ENCODE measurements at regions of chr5 and their contacts with region 1.

Region 1: GRCh38 chr5:172764849-172765765 is 5.9 kb downstream of the DUSP1 start:
- DNase-seq: peak; percentile 86 to 99 (median 98)
- ATAC-seq: peak; percentile 71 to 95 (median 94)
- H3K4me3 ChIP-seq: peak overlapping the region; percentile 52 to 68
- H3K4me3 Mint-ChIP-seq: peak overlapping the region; percentile 77 to 93 (median 81)
- H3K27ac ChIP-seq: peak overlapping the region; percentile 98
- H3K27ac Mint-ChIP-seq: peak overlapping the region; percentile 97
- H3K4me1 ChIP-seq: peaks cover 11 to 55% of the 10 kb centered on the region in 2 experiments
- H3K4me1 Mint-ChIP-seq: peaks cover 54 to 61% (median 59%) of the 10 kb centered on the region in 3 donors
- H3K27me3 ChIP-seq: no peaks in the 10 kb centered on the region
- H3K27me3 Mint-ChIP-seq: no peaks in the 10 kb centered on the region

Region 2: DNA sequence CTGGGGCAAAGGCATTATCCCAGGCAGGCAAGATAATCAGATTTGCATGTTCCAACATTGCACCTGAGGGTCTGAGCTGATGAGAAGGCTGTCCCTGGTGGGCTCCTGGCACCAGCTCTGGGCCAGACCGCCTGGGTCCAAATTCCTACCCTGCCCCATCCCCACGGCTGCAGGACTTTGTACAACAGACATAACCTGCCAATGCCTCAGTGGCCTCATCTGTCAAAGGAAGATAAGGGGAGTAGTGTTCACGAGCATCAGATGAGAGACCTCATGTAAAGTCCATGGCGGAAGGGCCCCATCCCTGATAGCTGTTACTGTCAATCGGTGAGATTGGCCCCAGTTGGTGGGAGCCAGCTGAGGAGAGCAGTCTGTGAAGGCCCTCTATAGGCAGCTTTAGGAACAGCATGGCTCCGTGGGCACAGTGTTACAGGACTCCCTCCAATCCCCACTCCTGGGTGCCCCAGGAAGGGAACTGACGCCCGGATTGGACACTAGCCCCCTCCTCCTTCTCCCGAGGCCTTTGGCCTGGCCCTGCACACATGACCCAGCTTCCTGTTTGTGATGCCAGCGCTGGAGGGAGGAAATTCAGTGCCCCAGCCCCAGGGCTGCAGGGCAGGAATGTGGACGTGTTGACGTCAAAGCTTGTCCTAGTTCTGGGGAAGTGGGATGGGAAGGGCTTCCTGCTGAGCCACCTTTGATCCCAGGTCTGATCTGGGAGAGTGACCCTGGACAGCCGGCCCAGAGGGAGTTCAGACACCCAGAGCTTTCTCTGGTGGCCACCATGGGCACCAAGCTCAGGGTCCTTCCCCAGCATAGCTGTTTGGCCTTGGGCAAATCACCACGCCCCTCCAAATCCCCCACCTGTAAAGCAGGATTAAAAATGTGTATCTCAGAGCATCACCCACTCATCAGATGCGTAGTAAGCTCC is 50.4 kb before region 1 on chr5:
- CTCF ChIA-PET with region 1: interaction called, 10 to 21 read pairs
- POLR2A ChIA-PET with region 1: interaction called, 3 read pairs
- DNase-seq: peak; percentile 28 to 81 (median 59)
- ATAC-seq: peak; percentile 65 to 81 (median 72)
- H3K4me3 ChIP-seq: no peak overlapping the region
- H3K4me3 Mint-ChIP-seq: no peak overlapping the region
- H3K27ac ChIP-seq: no peak overlapping the region
- H3K27ac Mint-ChIP-seq: no peak overlapping the region
- H3K4me1 ChIP-seq: peaks cover 0 to 27% of the 10 kb centered on the region in 2 experiments
- H3K4me1 Mint-ChIP-seq: peaks cover 8 to 10% (median 9%) of the 10 kb centered on the region in 3 donors
- H3K27me3 ChIP-seq: peaks cover 0 to 44% of the 10 kb centered on the region in 2 experiments
- H3K27me3 Mint-ChIP-seq: peaks cover 10% of the 10 kb centered on the region in 2 donors

Region 3: DNA sequence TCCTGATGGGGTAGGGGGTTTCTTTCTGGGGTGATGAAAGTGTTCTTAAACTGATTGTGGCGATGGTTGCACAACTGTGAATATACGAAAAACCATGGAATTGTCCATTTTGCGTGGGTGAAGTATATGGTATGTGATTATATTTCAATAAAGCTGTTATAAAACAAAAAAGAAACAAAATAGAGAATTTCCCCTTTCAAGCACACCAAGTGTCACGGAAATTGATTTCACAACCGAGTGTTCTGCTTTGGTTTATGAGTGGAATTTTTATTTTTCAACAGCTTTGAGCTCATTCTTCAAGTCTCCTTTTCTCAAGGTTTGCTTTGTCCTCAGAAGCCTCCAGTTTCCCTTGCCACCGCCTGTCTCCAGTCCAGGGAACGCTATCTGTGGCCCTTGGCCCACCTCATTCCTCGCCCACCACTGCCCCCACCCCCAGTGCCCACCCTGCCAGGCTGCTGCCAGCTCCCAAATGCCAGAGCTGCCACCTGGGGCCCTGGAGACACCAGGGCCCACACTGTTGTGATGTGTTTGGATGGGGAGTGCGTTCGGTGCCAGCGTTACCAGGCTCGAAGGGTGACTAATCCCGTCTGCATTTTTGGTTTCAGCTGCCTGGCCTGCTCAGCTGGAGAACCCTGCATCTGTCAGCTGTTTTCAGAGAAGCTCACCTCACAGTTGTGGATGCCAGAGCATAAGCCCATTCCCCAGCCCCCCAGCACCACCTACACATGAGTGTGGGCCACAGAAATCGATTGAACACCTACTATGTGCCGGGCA is 24.5 kb before region 1 on chr5:
- CTCF ChIA-PET with region 1: interaction called in 1 of 2 experiments, 3 read pairs
- POLR2A ChIA-PET with region 1: interaction called, 3 to 10 read pairs
- DNase-seq: peak in 1 of 35 experiments; percentile 11
- ATAC-seq: no peak
- H3K4me3 ChIP-seq: no peak overlapping the region
- H3K4me3 Mint-ChIP-seq: no peak overlapping the region
- H3K27ac ChIP-seq: no peak overlapping the region
- H3K27ac Mint-ChIP-seq: no peak overlapping the region
- H3K4me1 ChIP-seq: peaks cover 0 to 15% of the 10 kb centered on the region in 2 experiments
- H3K4me1 Mint-ChIP-seq: peaks cover 4 to 14% (median 9%) of the 10 kb centered on the region in 3 donors
- H3K27me3 ChIP-seq: peaks cover 0 to 5% of the 10 kb centered on the region in 2 experiments
- H3K27me3 Mint-ChIP-seq: no peaks in the 10 kb centered on the region

Region 4: GRCh38 chr5:172753101-172753500 is 12.0 kb before region 1 on chr5:
- CTCF ChIA-PET with region 1: no interaction called
- POLR2A ChIA-PET with region 1: interaction called, 5 to 17 read pairs
- DNase-seq: no peak
- ATAC-seq: no peak
- H3K4me3 ChIP-seq: no peak overlapping the region
- H3K4me3 Mint-ChIP-seq: no peak overlapping the region
- H3K27ac ChIP-seq: no peak overlapping the region
- H3K27ac Mint-ChIP-seq: no peak overlapping the region
- H3K4me1 ChIP-seq: no peaks in the 10 kb centered on the region
- H3K4me1 Mint-ChIP-seq: no peaks in the 10 kb centered on the region
- H3K27me3 ChIP-seq: peaks cover 0 to 26% of the 10 kb centered on the region in 2 experiments
- H3K27me3 Mint-ChIP-seq: peaks cover 0 to 2% of the 10 kb centered on the region in 2 donors

Region 5: DNA sequence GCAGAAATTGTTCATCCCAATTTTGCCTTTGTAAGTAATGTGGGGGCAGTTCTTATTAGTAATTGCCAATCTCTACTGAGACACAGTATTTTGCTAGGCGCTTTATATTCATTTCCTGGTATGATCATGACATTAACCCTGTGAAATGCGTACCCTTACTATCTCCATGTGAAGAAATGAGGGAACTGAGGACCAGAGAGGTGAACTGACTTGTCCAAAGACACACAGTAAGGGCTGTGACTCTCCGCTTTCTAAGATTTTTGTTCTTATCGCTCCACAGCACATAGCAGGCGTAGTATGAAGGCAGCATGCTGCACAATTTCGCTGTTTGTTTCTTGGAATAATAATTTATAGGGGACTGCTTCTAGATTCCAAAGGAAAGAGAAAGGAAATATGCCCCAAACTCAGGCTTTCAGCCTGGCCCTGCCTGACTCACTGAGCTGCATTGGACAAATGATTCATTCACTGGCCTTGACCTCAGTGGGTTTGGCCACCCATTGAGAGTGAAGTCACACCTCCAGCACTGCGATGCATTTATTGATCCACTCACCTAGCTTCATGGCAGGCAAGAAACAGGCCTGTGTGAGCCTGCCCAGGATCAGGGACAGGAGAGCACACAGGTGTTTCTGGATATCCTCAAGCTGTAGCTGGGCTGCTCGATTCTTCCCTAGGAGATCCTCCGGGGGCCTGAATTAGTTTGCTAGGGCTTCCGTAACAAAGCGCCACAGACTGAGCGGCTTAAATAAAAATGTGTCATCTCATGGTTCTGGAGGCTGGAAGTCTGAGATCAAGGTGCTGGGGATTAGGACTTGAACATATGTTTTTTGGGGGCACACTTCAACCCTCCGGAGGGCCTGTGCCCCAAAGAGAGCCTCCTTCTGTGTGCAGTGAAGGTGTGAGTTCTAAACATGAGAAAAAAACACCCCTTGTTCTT is 13.0 kb after region 1 on chr5:
- CTCF ChIA-PET with region 1: interaction called in 1 of 2 experiments, 8 read pairs
- POLR2A ChIA-PET with region 1: interaction called, 4 to 21 read pairs
- DNase-seq: no peak
- ATAC-seq: peak; percentile 26 to 56 (median 50)
- H3K4me3 ChIP-seq: peak overlapping the region in 1 of 2 donors; percentile 6
- H3K4me3 Mint-ChIP-seq: peak overlapping the region; percentile 38 to 62 (median 59)
- H3K27ac ChIP-seq: peak overlapping the region; percentile 97
- H3K27ac Mint-ChIP-seq: peak overlapping the region; percentile 89 to 94
- H3K4me1 ChIP-seq: peaks cover 4 to 27% of the 10 kb centered on the region in 2 experiments
- H3K4me1 Mint-ChIP-seq: peaks cover 29 to 49% (median 37%) of the 10 kb centered on the region in 3 donors
- H3K27me3 ChIP-seq: no peaks in the 10 kb centered on the region
- H3K27me3 Mint-ChIP-seq: no peaks in the 10 kb centered on the region

Region 6: DNA sequence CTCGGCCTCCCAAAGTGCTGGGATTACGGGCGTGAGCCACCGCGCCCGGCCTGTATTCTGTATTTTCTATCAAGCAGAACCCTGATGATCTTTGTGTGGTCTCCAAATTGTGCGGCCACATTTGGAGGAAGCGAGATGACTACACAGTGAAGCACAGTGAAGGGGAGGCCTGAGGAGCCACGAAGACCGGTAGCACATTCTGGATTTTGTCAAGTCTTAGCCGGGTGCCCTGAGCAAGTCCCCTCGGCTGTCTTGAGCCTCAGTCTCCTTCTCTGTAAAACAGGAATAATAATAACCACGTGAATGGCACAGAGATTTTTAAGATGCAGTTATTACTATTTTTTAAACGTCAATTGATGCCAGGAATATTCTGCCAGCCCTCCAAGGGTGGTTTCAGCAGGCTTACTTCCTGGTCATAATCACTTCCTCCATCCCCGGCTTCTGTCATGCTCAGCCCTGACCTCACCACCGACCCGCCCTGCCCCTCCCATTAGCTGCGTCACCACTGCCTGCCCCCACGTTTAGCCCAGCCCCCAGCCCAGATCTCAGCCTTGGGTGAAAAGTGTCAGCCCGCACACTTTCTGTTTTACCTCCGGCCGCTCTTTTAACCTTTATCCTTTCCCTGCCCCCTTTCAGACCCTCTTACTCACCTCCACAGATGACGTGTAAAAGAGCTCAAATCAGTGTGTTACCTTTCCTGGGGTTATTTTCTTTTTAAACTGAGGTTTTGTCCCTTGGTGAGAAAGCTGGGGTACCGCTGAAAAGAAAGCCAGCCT is 42.0 kb after region 1 on chr5:
- CTCF ChIA-PET with region 1: no interaction called
- POLR2A ChIA-PET with region 1: interaction called, 3 to 15 read pairs
- DNase-seq: peak; percentile 57 to 88 (median 79)
- ATAC-seq: peak; percentile 93 to 99 (median 98)
- H3K4me3 ChIP-seq: peak overlapping the region; percentile 32 to 38
- H3K4me3 Mint-ChIP-seq: peak overlapping the region; percentile 71 to 85 (median 78)
- H3K27ac ChIP-seq: peak overlapping the region; percentile 59
- H3K27ac Mint-ChIP-seq: peak overlapping the region; percentile 80 to 93
- H3K4me1 ChIP-seq: peaks cover 0 to 14% of the 10 kb centered on the region in 2 experiments
- H3K4me1 Mint-ChIP-seq: peaks cover 12 to 19% (median 15%) of the 10 kb centered on the region in 3 donors
- H3K27me3 ChIP-seq: peaks cover 0 to 3% of the 10 kb centered on the region in 2 experiments
- H3K27me3 Mint-ChIP-seq: no peaks in the 10 kb centered on the region

Region 7: DNA sequence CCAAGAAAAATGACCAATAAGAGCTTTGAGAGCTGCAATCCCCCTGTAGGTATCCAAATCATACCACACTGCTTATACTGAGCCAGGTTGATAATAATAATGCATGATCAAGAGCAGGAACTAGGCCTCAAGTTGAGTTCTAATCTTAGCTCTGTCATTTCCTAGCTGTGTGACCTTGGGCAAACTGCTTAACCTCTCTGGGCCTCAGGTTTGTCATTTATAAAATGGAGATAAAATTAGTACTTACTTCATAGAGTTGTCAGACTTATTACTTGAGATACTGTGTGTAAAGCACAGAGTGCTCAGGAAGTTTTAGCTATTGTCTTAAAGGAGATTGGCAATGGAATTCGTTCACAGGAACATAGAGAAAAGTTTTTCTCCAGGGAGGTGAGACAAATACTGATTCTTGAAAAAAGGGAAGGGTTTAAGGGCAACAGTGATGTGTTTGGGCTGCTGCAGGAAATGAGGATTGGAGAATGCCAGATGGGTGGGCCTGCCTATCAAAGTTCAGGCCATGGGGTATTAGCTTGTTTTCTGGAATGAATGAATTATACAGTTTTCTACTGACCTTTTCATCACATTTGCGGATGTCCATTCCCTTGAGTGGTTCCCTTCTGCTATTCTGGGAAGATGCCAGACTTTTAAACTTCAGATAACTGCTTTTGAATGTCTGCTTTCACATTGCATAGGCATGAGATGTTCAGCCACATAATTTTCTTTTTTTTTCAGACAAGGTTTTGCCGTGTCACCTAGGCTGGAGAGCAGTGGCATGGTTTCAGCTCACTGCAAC is 208.2 kb after region 1 on chr5:
- CTCF ChIA-PET with region 1: interaction called in 1 of 2 experiments, 4 read pairs
- POLR2A ChIA-PET with region 1: interaction called in 1 of 2 experiments, 14 read pairs
- DNase-seq: no peak
- ATAC-seq: no peak
- H3K4me3 ChIP-seq: no peak overlapping the region
- H3K4me3 Mint-ChIP-seq: no peak overlapping the region
- H3K27ac ChIP-seq: no peak overlapping the region
- H3K27ac Mint-ChIP-seq: no peak overlapping the region
- H3K4me1 ChIP-seq: no peaks in the 10 kb centered on the region
- H3K4me1 Mint-ChIP-seq: peaks cover 0 to 3% (median 0%) of the 10 kb centered on the region in 3 donors
- H3K27me3 ChIP-seq: peaks cover 0 to 2% of the 10 kb centered on the region in 2 experiments
- H3K27me3 Mint-ChIP-seq: peaks cover 0 to 4% of the 10 kb centered on the region in 2 donors

Measured in T-cell (primary cell).